ENCODE measurements at regions of chr15 and their contacts with region 1.

Region 1: GRCh38 chr15:72155635-72156616 is 37.7 kb downstream of the SENP8 start:
- DNase-seq: peak; percentile 82 to 85
- H3K4me3 ChIP-seq: peak overlapping the region; percentile 36
- H3K4me3 Mint-ChIP-seq: peak overlapping the region; percentile 76
- H3K27ac Mint-ChIP-seq: peak overlapping the region; percentile 60
- H3K4me1 ChIP-seq: no peaks in the 10 kb centered on the region; the same call in 1 of the 2 replicates
- H3K4me1 Mint-ChIP-seq: peaks cover 8% of the 10 kb centered on the region
- H3K27me3 ChIP-seq: no peaks in the 10 kb centered on the region
- H3K27me3 Mint-ChIP-seq: no peaks in the 10 kb centered on the region
- CTCF ChIP-seq: peak; percentile 78 to 85

Region 2: GRCh38 chr15:71752604-71753289 is 403.2 kb before region 1 on chr15:
- CTCF ChIA-PET with region 1: no interaction called
- POLR2A ChIA-PET with region 1: no interaction called
- intact Hi-C with region 1: loop called (anchors 10 kb)
- DNase-seq: peak; percentile 47 to 61
- H3K4me3 ChIP-seq: no peak overlapping the region
- H3K4me3 Mint-ChIP-seq: no peak overlapping the region
- H3K27ac Mint-ChIP-seq: no peak overlapping the region
- H3K4me1 ChIP-seq: peaks cover 24% of the 10 kb centered on the region
- H3K4me1 Mint-ChIP-seq: peaks cover 14% of the 10 kb centered on the region
- H3K27me3 ChIP-seq: no peaks in the 10 kb centered on the region
- H3K27me3 Mint-ChIP-seq: no peaks in the 10 kb centered on the region
- CTCF ChIP-seq: peak; percentile 45 to 64

Region 3: DNA sequence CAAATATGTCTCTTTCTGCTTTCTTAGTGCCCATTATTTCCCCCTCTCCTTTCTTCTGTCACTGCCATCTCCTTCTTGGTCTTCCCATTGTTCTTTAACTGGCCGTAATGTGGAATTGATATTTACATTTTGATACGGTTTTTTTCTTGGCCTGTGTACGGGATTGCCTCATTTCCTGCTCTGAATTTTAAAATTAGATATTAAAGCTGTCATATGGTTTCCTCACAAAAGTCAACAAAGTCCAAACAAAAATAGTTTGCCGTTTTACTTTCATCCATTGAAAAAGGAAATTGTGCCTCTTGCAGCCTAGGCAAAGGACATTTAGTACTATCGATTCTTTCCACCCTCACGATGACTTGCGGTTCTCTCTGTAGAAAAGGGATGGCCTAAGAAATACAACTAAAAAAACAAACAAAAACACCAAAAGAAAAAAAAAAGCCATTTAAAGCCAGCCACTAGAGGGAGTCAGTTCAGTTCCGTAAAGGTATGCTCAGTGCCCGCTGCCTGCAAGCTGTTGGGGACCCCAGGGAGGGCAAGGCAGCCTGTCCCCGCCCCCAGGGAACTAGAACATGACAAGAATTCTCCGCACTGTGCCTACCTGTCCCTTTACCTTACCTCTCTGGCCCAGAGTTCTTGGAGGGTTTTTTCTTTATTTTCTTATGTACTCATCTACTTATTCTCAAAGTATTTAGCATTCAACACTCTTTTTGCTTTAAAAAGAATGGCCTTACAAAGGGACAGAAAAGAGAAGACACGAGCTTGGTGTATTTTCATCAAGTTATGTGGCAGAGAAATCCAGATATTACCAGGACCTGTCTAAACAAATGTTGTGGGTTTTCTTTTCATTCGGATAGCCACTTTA is 375.6 kb before region 1 on chr15:
- CTCF ChIA-PET with region 1: no interaction called
- POLR2A ChIA-PET with region 1: no interaction called
- intact Hi-C with region 1: loop called (anchors 1 kb)
- DNase-seq: peak; percentile 55 to 69
- H3K4me3 ChIP-seq: no peak overlapping the region
- H3K4me3 Mint-ChIP-seq: no peak overlapping the region
- H3K27ac Mint-ChIP-seq: no peak overlapping the region
- H3K4me1 ChIP-seq: no peaks in the 10 kb centered on the region
- H3K4me1 Mint-ChIP-seq: peaks cover 7% of the 10 kb centered on the region
- H3K27me3 ChIP-seq: no peaks in the 10 kb centered on the region
- H3K27me3 Mint-ChIP-seq: no peaks in the 10 kb centered on the region
- CTCF ChIP-seq: peak; percentile 73 to 75

Region 4: DNA sequence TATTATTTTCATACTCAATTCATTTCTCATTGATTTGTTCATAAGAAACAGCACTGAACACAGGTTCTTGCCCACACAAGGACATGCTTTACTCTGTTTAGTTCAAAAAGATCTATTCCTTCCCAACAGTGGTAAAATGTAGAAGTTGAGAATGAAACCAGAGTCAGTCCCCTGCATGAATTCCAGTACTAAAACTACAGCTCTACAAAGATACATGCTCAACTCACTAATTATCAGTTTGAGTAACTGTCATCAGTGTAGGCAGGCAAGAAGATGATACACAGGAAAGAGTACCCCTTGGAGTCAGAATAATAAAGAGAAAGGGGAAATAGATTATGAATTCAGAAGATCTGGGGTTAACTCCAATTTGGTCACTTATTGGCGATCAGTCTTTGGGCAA is 302.4 kb before region 1 on chr15:
- CTCF ChIA-PET with region 1: no interaction called
- POLR2A ChIA-PET with region 1: no interaction called
- intact Hi-C with region 1: loop called (anchors 10 kb)
- DNase-seq: no peak
- H3K4me3 ChIP-seq: no peak overlapping the region
- H3K4me3 Mint-ChIP-seq: no peak overlapping the region
- H3K27ac Mint-ChIP-seq: no peak overlapping the region
- H3K4me1 ChIP-seq: no peaks in the 10 kb centered on the region
- H3K4me1 Mint-ChIP-seq: no peaks in the 10 kb centered on the region
- H3K27me3 ChIP-seq: no peaks in the 10 kb centered on the region
- H3K27me3 Mint-ChIP-seq: no peaks in the 10 kb centered on the region
- CTCF ChIP-seq: no peak

Region 5: GRCh38 chr15:72042839-72043238 is 113.1 kb before region 1 on chr15:
- CTCF ChIA-PET with region 1: interaction called, 4 read pairs
- POLR2A ChIA-PET with region 1: no interaction called
- intact Hi-C with region 1: loop called (anchors 2 kb)
- DNase-seq: no peak
- H3K4me3 ChIP-seq: no peak overlapping the region
- H3K4me3 Mint-ChIP-seq: no peak overlapping the region
- H3K27ac Mint-ChIP-seq: no peak overlapping the region
- H3K4me1 ChIP-seq: no peaks in the 10 kb centered on the region
- H3K4me1 Mint-ChIP-seq: no peaks in the 10 kb centered on the region
- H3K27me3 ChIP-seq: no peaks in the 10 kb centered on the region
- H3K27me3 Mint-ChIP-seq: no peaks in the 10 kb centered on the region
- CTCF ChIP-seq: no peak

Region 6: GRCh38 chr15:72085979-72086697 is 69.8 kb before region 1 on chr15:
- CTCF ChIA-PET with region 1: no interaction called
- POLR2A ChIA-PET with region 1: no interaction called
- intact Hi-C with region 1: no loop called
- DNase-seq: no peak
- H3K4me3 ChIP-seq: no peak overlapping the region
- H3K4me3 Mint-ChIP-seq: no peak overlapping the region
- H3K27ac Mint-ChIP-seq: no peak overlapping the region
- H3K4me1 ChIP-seq: peaks cover 1% of the 10 kb centered on the region
- H3K4me1 Mint-ChIP-seq: peaks cover 23% of the 10 kb centered on the region
- H3K27me3 ChIP-seq: no peaks in the 10 kb centered on the region
- H3K27me3 Mint-ChIP-seq: no peaks in the 10 kb centered on the region
- CTCF ChIP-seq: no peak

Region 7: DNA sequence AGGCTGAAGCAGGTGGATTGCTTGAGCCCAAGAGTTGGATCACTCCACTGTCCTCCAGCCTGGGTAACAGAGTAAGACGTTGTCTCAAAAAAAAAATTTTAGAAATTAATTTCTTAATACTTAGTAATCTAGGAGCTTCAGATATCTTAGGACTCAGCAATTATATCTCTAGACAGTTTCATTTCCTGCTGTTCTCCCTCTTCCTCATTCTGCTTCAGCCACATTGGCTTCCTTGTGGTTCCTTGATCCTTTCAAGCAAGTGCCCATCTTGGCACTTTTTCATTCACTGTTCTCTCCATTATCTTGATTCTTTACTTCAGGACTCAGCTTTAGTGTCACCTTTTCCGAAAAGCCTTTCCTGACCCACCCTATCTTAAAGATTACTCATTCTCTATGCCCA is 264.6 kb after region 1 on chr15:
- CTCF ChIA-PET with region 1: no interaction called
- POLR2A ChIA-PET with region 1: no interaction called
- intact Hi-C with region 1: no loop called
- DNase-seq: no peak
- H3K4me3 ChIP-seq: no peak overlapping the region
- H3K4me3 Mint-ChIP-seq: no peak overlapping the region
- H3K27ac Mint-ChIP-seq: no peak overlapping the region
- H3K4me1 ChIP-seq: no peaks in the 10 kb centered on the region
- H3K4me1 Mint-ChIP-seq: no peaks in the 10 kb centered on the region
- H3K27me3 ChIP-seq: no peaks in the 10 kb centered on the region
- H3K27me3 Mint-ChIP-seq: no peaks in the 10 kb centered on the region
- CTCF ChIP-seq: no peak